ENCODE measurements at regions of chr1 and their contacts with region 1.

Region 1: GRCh38 chr1:7235871-7236517 is 450.7 kb downstream of the CAMTA1 start:
- DNase-seq: peak in 1 of 2 experiments; percentile 36
- H3K4me3 ChIP-seq: no peak overlapping the region
- H3K27ac ChIP-seq: no peak overlapping the region
- H3K4me1 ChIP-seq: no peaks in the 10 kb centered on the region; a peak in 1 of 7 replicates
- H3K27me3 ChIP-seq: no peaks in the 10 kb centered on the region
- CTCF ChIP-seq: no peak
- EP300 ChIP-seq: no peak
- POLR2A ChIP-seq: no peak
- RAD21 ChIP-seq: no peak

Region 2: DNA sequence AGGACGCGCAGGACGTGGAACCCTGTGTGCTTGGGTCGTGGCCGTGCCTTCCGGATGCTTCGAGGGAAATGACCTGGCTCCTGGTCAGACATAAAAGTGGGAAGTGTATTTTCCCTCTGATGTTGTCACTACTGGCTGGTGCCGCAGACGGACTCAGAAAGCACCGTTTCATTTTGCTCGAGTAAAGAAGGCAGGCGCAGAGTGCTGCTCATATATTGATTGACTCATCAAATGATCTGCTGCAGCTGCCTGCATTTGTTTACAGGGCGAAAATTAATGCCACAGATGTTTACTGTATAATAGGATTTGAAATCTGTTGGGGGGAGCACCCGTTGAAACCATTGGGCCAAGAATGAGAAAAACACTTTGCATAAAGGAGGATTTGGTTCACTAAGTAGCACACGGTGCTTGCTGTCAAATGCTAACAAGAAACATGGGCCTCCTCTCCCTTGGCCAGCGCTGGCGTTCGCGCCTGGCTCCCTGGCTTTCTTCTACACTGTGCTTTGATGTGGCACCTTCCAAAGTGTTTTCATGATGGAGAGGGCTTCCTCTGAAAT is 85.2 kb before region 1 on chr1:
- CTCF ChIA-PET with region 1: no interaction called
- POLR2A ChIA-PET with region 1: no interaction called
- DNase-seq: no peak
- H3K4me3 ChIP-seq: no peak overlapping the region
- H3K27ac ChIP-seq: no peak overlapping the region
- H3K4me1 ChIP-seq: peaks cover 3 to 28% (median 16%) of the 10 kb centered on the region in 4 experiments
- H3K27me3 ChIP-seq: no peaks in the 10 kb centered on the region
- CTCF ChIP-seq: no peak
- EP300 ChIP-seq: no peak
- POLR2A ChIP-seq: no peak
- RAD21 ChIP-seq: no peak

Region 3: GRCh38 chr1:7224644-7225043 is 11.3 kb before region 1 on chr1:
- CTCF ChIA-PET with region 1: interaction called, 17 read pairs
- POLR2A ChIA-PET with region 1: no interaction called
- DNase-seq: peak in 1 of 2 experiments; percentile 15
- H3K4me3 ChIP-seq: no peak overlapping the region
- H3K27ac ChIP-seq: no peak overlapping the region
- H3K4me1 ChIP-seq: no peaks in the 10 kb centered on the region; a peak in 3 of 7 replicates
- H3K27me3 ChIP-seq: no peaks in the 10 kb centered on the region; a peak in 1 of 7 replicates
- CTCF ChIP-seq: peak; percentile 68 to 73 (median 72)
- EP300 ChIP-seq: no peak
- POLR2A ChIP-seq: no peak
- RAD21 ChIP-seq: peak; percentile 79 to 87